Activated CD4-positive, alpha-beta T cell treated with anti-CD3 and anti-CD28 coated beads, Interleukin-2, amount 10 ng/mL, durations not matched to agents 24 days and 14 days (primary cell): ENCODE measurements at regions of chr1 and their contacts with region 1.

Region 1: DNA sequence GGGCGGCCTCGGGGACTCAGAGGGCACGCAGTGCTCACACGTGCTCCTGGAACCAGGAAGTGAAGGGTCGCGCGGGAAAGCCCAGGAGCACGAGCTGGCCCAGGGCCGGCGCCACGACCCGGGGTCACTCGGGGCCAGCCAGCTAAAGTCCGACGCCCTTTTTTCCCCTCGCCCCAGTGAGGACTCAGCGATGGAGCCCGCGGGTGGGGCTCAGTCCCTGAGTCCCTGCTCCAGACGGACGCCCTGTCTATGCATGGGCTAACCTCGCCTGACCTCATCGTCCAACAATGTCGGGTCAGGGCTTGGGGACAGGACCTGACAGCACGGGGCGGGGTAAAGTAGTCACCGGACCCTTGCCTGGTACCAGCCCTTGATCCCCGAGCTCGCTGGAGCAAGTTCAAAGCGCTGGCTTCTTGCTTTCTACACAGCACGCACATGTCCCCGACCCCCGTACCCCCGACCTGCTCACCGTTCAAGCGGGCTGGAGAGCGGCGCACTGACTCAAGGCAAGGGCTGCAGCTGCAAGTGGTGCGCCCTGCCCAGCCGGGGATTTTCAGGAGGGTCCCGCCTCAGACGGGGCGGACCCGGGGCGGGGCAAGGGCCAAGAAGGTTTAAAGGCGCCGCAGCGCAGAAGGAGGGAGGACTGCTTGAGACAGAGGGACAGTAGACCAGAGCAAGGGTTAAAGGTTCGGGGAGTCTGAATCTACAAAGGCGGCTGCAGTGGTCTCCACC is at the start of gene TAGLN2:
- DNase-seq: peak; percentile 98
- H3K4me3 Mint-ChIP-seq: peak within 1 kb of the TSS; percentile 92
- H3K27ac Mint-ChIP-seq: peak within 1 kb of the TSS; percentile 98
- H3K4me1 Mint-ChIP-seq: peaks cover 45% of the 10 kb centered on the region
- H3K27me3 Mint-ChIP-seq: no peaks in the 10 kb centered on the region
- total RNA-seq, gene TAGLN2: 488 and 517 TPM in 2 replicates

Region 2: GRCh38 chr1:159015440-159015909 is 909.7 kb before region 1 on chr1:
- intact Hi-C with region 1: loop called (anchors 2 kb)
- DNase-seq: peak; percentile 91
- H3K4me3 Mint-ChIP-seq: peak overlapping the region; percentile 86
- H3K27ac Mint-ChIP-seq: peak overlapping the region; percentile 95
- H3K4me1 Mint-ChIP-seq: peaks cover 59% of the 10 kb centered on the region
- H3K27me3 Mint-ChIP-seq: no peaks in the 10 kb centered on the region

Region 3: GRCh38 chr1:159077120-159077961 is 847.8 kb before region 1 on chr1:
- intact Hi-C with region 1: loop called (anchors 5 kb)
- DNase-seq: peak; percentile 99
- H3K4me3 Mint-ChIP-seq: peak overlapping the region; percentile 87
- H3K27ac Mint-ChIP-seq: peak overlapping the region; percentile 99
- H3K4me1 Mint-ChIP-seq: peaks cover 34% of the 10 kb centered on the region
- H3K27me3 Mint-ChIP-seq: peaks cover 5% of the 10 kb centered on the region

Region 4: DNA sequence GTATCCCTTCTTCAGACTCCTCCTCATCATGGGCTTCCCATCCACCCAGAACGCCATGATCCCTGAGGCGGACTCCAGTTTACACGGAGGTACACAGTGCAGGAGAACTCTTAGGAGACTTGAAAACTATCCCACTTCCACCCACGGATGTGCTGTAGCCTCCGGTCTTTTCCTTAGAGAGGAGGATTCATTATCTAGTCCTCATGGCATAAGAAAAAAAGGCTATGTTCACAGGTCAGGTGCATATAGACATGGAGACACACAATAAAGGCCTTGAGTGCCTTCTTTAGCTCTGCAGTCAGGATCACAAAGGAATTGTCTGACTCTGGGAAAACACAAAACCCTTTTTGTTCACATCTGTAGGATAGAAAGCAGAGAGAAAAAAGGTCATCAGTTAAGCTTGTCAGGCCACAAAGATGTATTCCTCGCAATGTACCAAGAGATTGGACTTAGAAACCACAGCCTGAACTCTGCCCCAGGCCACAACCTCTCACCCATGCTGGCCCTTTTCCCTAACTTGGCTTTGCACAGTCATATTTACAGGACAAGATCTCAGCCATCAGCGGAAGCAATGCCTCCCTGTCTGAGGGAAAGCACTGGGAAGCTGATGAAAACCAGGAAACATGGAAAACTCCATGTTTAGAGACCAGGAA is 219.8 kb before region 1 on chr1:
- intact Hi-C with region 1: no loop called
- DNase-seq: no peak
- H3K4me3 Mint-ChIP-seq: no peak overlapping the region
- H3K27ac Mint-ChIP-seq: no peak overlapping the region
- H3K4me1 Mint-ChIP-seq: no peaks in the 10 kb centered on the region
- H3K27me3 Mint-ChIP-seq: peaks cover 3% of the 10 kb centered on the region

Region 5: GRCh38 chr1:159780583-159781582 is 144.3 kb before region 1 on chr1 and contains the start of gene DUSP23:
- intact Hi-C with region 1: loop called (anchors 1 kb)
- DNase-seq: peak; percentile 99
- H3K4me3 Mint-ChIP-seq: peak within 1 kb of the TSS; percentile 80
- H3K27ac Mint-ChIP-seq: peak within 1 kb of the TSS; percentile 30
- H3K4me1 Mint-ChIP-seq: peaks cover 7% of the 10 kb centered on the region
- H3K27me3 Mint-ChIP-seq: peaks cover 19% of the 10 kb centered on the region
- total RNA-seq, gene DUSP23: 30.9 and 33.0 TPM in 2 replicates

Region 6: DNA sequence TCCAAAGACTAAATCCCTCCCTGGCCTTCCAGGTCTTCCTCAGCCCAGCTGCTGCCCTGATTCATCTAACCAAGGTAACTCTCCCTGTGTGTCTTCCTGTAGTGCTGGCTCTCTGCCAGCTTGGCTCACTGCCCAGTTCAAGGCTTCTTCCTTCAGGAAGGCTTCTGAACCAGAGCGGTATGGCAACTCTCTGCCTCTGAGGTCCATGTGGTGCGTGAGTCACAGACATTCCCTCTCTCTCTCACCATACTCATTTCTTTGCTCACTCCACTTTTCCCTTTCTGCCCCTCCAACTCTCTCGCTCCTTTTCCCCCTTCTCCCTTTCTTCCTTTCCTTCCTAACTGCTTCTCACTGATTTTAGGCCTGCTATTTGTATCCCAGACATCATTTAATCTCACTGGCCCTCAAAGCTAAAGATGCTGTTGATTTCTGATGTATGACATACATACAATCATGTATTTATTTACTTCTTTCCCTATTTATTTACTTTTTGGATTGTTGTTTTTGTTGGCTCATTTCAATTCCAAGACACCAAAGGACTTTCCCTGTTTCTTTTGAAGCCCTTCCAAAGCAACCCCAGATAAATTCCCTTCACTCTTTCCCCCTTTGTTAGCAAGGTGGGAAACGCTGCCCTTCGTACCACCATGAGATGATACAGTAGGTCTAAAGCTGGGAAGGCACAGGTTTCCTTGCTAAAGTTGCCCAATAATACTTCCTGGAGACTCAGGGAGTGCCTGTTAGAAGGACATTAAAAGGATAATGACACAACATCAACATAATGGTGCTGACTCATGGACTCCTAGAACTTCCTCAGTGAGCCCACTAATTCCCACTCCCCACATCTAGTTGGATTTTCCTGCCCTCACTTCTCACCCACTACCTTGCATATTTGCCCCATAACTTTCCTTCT is 43.0 kb before region 1 on chr1:
- intact Hi-C with region 1: no loop called
- DNase-seq: no peak
- H3K4me3 Mint-ChIP-seq: no peak overlapping the region
- H3K27ac Mint-ChIP-seq: no peak overlapping the region
- H3K4me1 Mint-ChIP-seq: no peaks in the 10 kb centered on the region
- H3K27me3 Mint-ChIP-seq: no peaks in the 10 kb centered on the region

Region 7: GRCh38 chr1:159996653-159997052 is 71.5 kb after region 1 on chr1:
- intact Hi-C with region 1: no loop called
- DNase-seq: no peak
- H3K4me3 Mint-ChIP-seq: no peak overlapping the region
- H3K27ac Mint-ChIP-seq: no peak overlapping the region
- H3K4me1 Mint-ChIP-seq: peaks cover 2% of the 10 kb centered on the region
- H3K27me3 Mint-ChIP-seq: peaks cover 42% of the 10 kb centered on the region

Region 8: DNA sequence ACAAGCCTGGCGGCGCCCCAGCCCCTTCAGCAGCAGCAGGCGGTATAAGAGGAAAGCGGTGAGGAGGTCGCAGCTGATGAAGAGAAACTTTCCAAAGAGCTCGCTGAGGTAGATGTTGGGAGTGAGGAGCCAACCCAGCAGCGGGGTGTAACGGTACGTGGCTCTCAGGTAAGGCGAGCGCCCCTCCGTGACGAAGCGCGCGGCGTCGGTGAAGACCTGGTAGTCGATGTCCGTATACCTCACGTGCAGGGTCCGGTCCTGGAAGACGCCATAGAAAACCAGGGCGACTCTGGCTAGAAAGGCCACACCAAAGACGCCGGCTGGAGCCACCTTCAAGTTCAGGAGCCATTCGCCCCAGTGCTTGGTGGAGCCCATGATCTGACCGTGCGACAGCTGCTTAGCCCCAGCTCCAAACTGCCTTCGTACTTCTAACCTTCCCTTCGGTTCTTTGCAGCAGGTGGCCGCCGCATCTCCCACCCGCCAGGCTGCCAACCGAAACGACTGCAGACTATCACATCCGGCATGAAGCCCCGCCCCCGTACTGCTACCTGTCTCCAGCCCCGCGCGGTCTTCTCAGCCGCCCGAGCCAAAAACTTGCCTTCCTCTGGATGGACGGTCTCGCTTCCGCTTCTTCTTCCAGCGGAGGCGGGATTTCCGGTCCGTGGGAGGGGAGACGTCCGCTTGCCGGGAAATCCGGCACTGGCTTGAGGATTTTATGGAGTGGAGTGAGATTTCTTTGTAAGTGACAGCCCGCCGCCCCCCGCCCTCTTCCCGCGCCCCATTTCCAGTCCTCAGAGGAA is 106.4 kb after region 1 on chr1 and contains the start of gene PIGM:
- intact Hi-C with region 1: loop called (anchors 1 kb)
- DNase-seq: peak; percentile 98
- H3K4me3 Mint-ChIP-seq: peak within 1 kb of the TSS; percentile 92
- H3K27ac Mint-ChIP-seq: peak within 1 kb of the TSS; percentile 85
- H3K4me1 Mint-ChIP-seq: peaks cover 32% of the 10 kb centered on the region
- H3K27me3 Mint-ChIP-seq: peaks cover 15% of the 10 kb centered on the region
- total RNA-seq, gene PIGM: 5.5 and 5.8 TPM in 2 replicates

Region 9: GRCh38 chr1:160261893-160262794 is 337.0 kb after region 1 on chr1 and contains the start of gene DCAF8:
- intact Hi-C with region 1: loop called (anchors 5 kb)
- DNase-seq: peak; percentile 100
- H3K4me3 Mint-ChIP-seq: peak within 1 kb of the TSS; percentile 99
- H3K27ac Mint-ChIP-seq: peak within 1 kb of the TSS; percentile 99
- H3K4me1 Mint-ChIP-seq: peaks cover 31% of the 10 kb centered on the region
- H3K27me3 Mint-ChIP-seq: no peaks in the 10 kb centered on the region
- total RNA-seq, gene DCAF8: 117 and 121 TPM in 2 replicates

Region 10: GRCh38 chr1:160629286-160630210 is 704.4 kb after region 1 on chr1:
- intact Hi-C with region 1: loop called (anchors 10 kb)
- DNase-seq: peak; percentile 94
- H3K4me3 Mint-ChIP-seq: peak overlapping the region; percentile 74
- H3K27ac Mint-ChIP-seq: peak overlapping the region; percentile 99
- H3K4me1 Mint-ChIP-seq: peaks cover 91% of the 10 kb centered on the region
- H3K27me3 Mint-ChIP-seq: no peaks in the 10 kb centered on the region